ENCODE measurements at regions of chr1 and their contacts with region 1.

Region 1: DNA sequence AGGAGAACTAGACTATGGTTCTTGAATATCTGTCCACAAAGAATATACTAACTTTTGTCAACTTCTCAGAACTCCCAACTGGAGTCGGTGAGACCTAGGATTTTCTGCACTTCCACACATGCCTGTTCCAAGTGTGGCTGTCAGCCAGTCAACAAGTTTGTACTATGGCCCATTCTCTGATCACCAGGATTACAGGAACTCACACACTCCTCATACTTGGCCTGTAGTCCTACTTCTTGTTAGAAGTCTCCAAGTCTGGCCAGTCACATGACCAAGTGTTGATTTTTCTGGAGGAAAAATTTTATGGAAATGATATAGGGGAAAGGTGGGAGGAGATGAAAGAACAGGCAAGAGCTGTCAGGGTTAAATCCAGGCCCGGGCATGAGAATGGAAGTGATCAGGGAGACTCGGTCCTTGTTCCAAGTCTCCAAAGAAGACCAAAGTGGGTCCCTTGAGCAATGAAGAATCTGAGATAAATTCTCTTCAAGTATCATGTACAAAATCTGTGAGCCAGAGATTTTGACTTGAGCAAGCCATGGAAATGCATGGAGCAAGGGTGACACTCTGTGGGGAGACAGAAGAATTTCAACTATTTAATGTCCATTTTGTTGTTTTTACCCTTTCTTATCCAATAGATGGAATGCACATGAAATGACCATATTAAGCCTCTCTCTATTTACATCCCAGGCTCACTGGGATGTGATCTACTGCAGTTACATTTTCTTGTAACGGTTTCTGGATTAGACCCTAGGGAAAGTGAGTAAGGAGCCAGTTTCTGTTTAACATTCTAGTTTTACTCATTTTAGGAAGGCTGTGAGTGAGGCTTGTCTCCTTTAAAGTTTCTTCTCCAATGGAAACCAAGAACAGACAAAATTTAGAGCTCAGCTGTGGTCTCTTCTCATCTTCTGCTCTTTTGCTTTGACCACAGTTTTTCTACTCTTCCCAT is 320.9 kb downstream of the ASTN1 start:
- DNase-seq: peak in 2 of 4 donors; percentile 57 to 79
- ATAC-seq: peak; percentile 86
- H3K4me3 ChIP-seq: no peak overlapping the region
- H3K27ac ChIP-seq: no peak overlapping the region
- H3K4me1 ChIP-seq: no peaks in the 10 kb centered on the region
- H3K27me3 ChIP-seq: no peaks in the 10 kb centered on the region
- CTCF ChIP-seq: peak in 1 of 2 donors; percentile 44

Region 2: GRCh38 chr1:176374967-176375569 is 468.6 kb before region 1 on chr1:
- intact Hi-C with region 1: loop called in 1 of 2 experiments (anchors 10 kb)
- DNase-seq: peak in 3 of 4 donors; percentile 47 to 77 (median 48)
- ATAC-seq: peak; percentile 97
- H3K4me3 ChIP-seq: no peak overlapping the region
- H3K27ac ChIP-seq: no peak overlapping the region
- H3K4me1 ChIP-seq: no peaks in the 10 kb centered on the region
- H3K27me3 ChIP-seq: no peaks in the 10 kb centered on the region
- CTCF ChIP-seq: peak; percentile 81 to 87

Region 3: DNA sequence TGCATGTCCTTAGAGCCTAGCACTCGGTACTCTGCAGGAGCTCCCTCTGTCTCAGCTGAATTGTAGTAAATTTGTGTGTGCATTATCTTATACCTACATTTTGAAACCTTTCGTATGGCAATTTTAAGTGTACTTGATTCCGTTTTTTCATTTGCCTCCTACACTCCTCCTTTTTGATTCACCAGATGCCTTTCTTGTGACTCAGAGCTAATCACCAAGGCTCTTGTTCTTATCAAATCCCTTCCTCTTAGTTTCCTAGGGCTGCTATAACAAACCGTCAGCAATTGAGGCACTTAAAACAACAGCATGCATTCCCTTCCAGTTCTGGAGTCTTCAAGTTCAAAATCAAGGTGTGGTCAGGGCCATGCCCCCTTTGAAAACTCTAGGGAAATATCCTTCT is 59.8 kb after region 1 on chr1:
- intact Hi-C with region 1: no loop called
- DNase-seq: no peak
- ATAC-seq: peak; percentile 54
- H3K4me3 ChIP-seq: no peak overlapping the region
- H3K27ac ChIP-seq: no peak overlapping the region
- H3K4me1 ChIP-seq: no peaks in the 10 kb centered on the region
- H3K27me3 ChIP-seq: peaks cover 2 to 42% of the 10 kb centered on the region in 2 donors
- CTCF ChIP-seq: no peak

Region 4: DNA sequence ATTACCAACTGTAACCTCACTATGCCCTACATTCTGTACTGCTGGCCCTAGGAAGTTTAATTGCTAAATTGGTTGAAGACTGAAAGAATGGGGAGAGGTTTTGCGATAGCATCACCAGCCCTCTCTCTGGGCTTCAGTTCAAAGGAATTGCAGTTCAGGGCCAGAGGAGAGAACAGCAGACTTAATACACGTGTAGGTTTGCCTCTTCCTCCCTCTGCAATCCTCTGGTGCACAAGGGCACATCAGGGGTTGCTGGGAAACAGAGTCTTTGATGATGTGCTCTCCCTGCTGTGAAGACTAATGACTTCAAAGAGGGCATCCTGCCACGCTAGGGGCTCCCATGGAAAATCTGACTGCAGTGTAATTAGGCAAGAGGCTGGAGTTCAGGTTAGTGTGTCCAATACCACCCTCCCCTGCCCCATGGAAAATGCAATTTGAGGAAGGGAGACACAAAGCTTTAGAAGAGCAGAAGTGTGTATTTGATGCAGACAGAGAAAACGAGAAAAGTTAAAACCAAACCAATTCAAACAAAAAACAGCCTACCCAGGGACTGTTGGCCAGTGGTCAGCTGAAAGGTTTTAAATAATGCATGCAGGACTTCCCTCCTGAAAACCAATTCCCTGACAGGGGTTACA is 152.9 kb after region 1 on chr1:
- intact Hi-C with region 1: no loop called
- DNase-seq: no peak
- ATAC-seq: no peak
- H3K4me3 ChIP-seq: no peak overlapping the region
- H3K27ac ChIP-seq: no peak overlapping the region
- H3K4me1 ChIP-seq: no peaks in the 10 kb centered on the region
- H3K27me3 ChIP-seq: peaks cover 0 to 3% of the 10 kb centered on the region in 2 donors
- CTCF ChIP-seq: no peak